ENCODE measurements at regions of chr6 and their contacts with region 1.

Region 1: GRCh38 chr6:37566111-37566949 is 66.6 kb upstream of the CCDC167 start:
- DNase-seq: no peak
- ATAC-seq: peak; percentile 93
- H3K4me3 ChIP-seq: peak overlapping the region; percentile 32 to 65
- H3K27ac ChIP-seq: peak overlapping the region; percentile 85
- H3K4me1 ChIP-seq: peaks cover 40% of the 10 kb centered on the region
- H3K27me3 ChIP-seq: no peaks in the 10 kb centered on the region
- CTCF ChIP-seq: peak; percentile 97

Region 2: GRCh38 chr6:37483917-37484785 is 82.2 kb before region 1 on chr6:
- CTCF ChIA-PET with region 1: interaction called, 18 read pairs
- POLR2A ChIA-PET with region 1: no interaction called
- in situ Hi-C with region 1: no loop called
- intact Hi-C with region 1: loop called (anchors 2 kb)
- DNase-seq: no peak
- ATAC-seq: peak; percentile 87
- H3K4me3 ChIP-seq: no peak overlapping the region
- H3K27ac ChIP-seq: peak overlapping the region; percentile 83
- H3K4me1 ChIP-seq: peaks cover 15% of the 10 kb centered on the region
- H3K27me3 ChIP-seq: no peaks in the 10 kb centered on the region
- CTCF ChIP-seq: peak; percentile 96

Region 3: DNA sequence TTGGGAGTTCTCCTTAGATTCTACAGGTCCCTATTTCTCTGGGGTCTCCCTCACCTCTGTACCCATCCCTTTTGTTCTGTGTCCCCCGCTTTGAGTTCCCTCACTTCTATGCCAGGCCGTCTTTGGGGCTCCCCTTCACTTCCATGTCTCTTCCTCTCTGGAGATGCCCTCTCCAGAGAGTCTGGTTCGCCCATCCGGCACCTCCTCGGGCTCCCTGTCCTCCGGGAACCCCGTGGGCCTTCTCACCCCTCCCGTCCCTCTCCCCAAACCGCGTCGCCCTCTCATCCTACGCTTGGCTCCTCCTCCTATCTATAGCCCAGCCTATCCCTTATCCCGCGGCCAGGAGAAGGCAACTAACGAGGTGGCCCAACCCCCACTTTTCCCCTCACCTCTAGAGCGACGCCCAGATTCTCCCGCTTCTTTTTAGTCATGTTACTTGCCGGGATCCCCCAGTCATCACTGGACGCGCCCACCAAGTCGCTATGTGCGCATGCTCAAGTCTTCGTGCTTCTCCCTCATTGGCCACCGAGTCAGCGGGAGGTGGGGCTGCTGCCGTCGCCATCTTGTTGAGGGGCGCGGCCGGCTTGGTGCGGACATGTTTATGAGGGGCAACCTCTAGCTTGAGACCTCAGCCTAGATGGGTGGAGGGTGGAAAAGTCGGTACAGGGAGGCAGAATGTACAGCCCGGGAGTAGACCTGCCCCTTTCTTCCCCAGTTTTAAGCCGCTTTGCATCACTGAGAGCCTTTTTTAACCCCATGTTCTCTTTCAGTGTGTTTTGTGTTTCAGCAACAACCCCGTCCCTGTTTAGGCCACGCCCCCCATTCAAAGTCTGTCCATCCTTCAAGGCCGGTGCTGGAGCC is 66.7 kb before region 1 on chr6 and contains the start of gene CCDC167:
- CTCF ChIA-PET with region 1: no interaction called
- POLR2A ChIA-PET with region 1: interaction called, 11 read pairs
- in situ Hi-C with region 1: no loop called
- intact Hi-C with region 1: no loop called
- DNase-seq: peak; percentile 91
- ATAC-seq: peak; percentile 97
- H3K4me3 ChIP-seq: peak within 1 kb of the TSS; percentile 75 to 76
- H3K27ac ChIP-seq: peak within 1 kb of the TSS; percentile 95
- H3K4me1 ChIP-seq: peaks cover 9% of the 10 kb centered on the region
- H3K27me3 ChIP-seq: no peaks in the 10 kb centered on the region
- CTCF ChIP-seq: no peak
- total RNA-seq, gene CCDC167: 57.6 TPM

Region 4: GRCh38 chr6:37538107-37538506 is 28.2 kb before region 1 on chr6:
- CTCF ChIA-PET with region 1: interaction called, 14 read pairs
- POLR2A ChIA-PET with region 1: no interaction called
- in situ Hi-C with region 1: no loop called
- intact Hi-C with region 1: no loop called
- DNase-seq: peak; percentile 42
- ATAC-seq: peak; percentile 88
- H3K4me3 ChIP-seq: no peak overlapping the region
- H3K27ac ChIP-seq: peak overlapping the region; percentile 57
- H3K4me1 ChIP-seq: peaks cover 33% of the 10 kb centered on the region
- H3K27me3 ChIP-seq: no peaks in the 10 kb centered on the region
- CTCF ChIP-seq: peak; percentile 88

Region 5: GRCh38 chr6:37691904-37692806 is 125.8 kb after region 1 on chr6:
- CTCF ChIA-PET with region 1: interaction called, 4 read pairs
- POLR2A ChIA-PET with region 1: no interaction called
- in situ Hi-C with region 1: no loop called
- intact Hi-C with region 1: loop called (anchors 10 kb)
- DNase-seq: peak; percentile 45
- ATAC-seq: peak; percentile 85
- H3K4me3 ChIP-seq: no peak overlapping the region
- H3K27ac ChIP-seq: peak overlapping the region; percentile 57
- H3K4me1 ChIP-seq: peaks cover 18% of the 10 kb centered on the region
- H3K27me3 ChIP-seq: no peaks in the 10 kb centered on the region
- CTCF ChIP-seq: peak; percentile 95

Region 6: DNA sequence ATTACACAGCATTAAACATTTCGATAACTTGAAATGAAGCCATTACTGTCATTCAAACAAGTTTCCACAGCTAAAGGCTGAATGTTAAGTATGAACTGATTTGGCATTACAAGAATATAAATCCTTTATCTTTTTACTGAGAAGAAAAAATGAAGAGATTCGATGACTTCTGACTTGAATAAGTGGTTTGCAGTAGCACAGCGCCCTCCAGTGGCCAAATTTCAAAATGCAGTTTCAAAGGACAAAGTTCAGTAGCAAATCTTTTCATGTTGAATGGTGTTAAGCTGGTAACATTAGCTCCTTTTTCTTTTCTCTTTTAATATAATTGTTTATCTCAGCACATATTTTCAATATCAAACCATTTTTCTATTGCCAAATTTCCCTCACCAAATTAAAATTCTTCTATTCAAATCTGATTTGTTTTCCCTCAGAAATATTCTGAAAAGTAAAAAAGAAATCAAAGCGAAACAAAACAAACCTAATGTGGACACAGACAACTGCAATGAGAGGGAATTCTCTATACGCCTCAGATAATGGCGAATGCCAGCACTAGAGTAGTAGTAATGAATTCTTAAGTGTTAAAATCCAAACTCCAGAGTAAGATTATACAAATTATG is 927.7 kb after region 1 on chr6:
- CTCF ChIA-PET with region 1: no interaction called
- POLR2A ChIA-PET with region 1: no interaction called
- in situ Hi-C with region 1: no loop called
- intact Hi-C with region 1: loop called (anchors 10 kb)
- DNase-seq: peak; percentile 60
- ATAC-seq: peak; percentile 85
- H3K4me3 ChIP-seq: no peak overlapping the region
- H3K27ac ChIP-seq: no peak overlapping the region
- H3K4me1 ChIP-seq: no peaks in the 10 kb centered on the region
- H3K27me3 ChIP-seq: no peaks in the 10 kb centered on the region
- CTCF ChIP-seq: peak; percentile 81; the same call in 1 of the 2 replicates

Measured in Panc1 (cell line).